HAP-1 (cell line): ENCODE measurements at regions of chr1 and their contacts with region 1.

Region 1: GRCh38 chr1:54996359-54996868 is 2.3 kb upstream of the BSND start:
- DNase-seq: peak; percentile 51 to 91
- H3K4me3 ChIP-seq: no peak overlapping the region
- H3K4me1 ChIP-seq: peaks cover 3% of the 10 kb centered on the region; the same call in 1 of the 2 replicates
- H3K27me3 ChIP-seq: peaks cover 12% of the 10 kb centered on the region

Region 2: GRCh38 chr1:54337928-54338327 is 658.5 kb before region 1 on chr1:
- in situ Hi-C with region 1: no loop called
- DNase-seq: no peak
- H3K4me3 ChIP-seq: no peak overlapping the region
- H3K4me1 ChIP-seq: no peaks in the 10 kb centered on the region
- H3K27me3 ChIP-seq: no peaks in the 10 kb centered on the region

Region 3: DNA sequence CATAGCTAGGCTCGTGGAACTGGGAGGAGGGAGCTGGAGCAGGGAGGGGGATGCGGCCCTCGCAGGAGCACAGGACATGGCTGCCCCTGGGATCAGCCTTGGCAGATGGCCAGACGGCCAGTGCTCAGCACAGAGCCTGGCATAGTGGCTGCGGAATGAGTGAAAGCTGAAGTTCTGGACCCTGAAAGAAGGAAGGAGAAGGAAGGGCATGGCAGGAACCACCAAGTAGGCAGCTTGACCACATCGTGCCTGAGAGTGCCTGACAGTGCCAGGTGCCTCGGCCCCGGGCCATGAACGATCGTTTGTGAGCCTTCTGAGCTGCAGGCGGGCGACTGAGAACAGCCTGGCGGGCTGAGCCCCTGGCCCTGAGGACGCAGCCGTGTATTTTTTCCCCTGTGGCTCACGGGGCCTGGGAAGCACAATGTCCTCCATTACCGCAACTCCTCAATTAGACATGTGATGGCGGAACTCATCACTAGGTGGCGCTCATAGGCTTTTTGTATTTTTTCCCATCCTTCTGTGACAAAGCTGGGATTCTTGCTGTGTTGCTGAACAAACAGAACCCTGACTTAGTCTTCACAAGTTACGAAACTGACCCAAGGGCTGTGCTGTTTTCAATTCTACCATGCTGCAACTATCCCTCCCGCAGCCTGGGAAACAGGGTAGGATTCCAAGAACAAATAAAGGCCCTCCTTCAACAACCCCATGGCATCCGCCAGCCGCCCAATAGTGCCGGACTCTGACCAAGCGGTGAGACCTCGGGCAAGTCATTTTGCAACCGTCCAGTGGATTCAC is 45.8 kb before region 1 on chr1:
- in situ Hi-C with region 1: loop called (anchors 5 kb)
- DNase-seq: peak; percentile 76 to 82
- H3K4me3 ChIP-seq: no peak overlapping the region
- H3K4me1 ChIP-seq: no peaks in the 10 kb centered on the region; the same call in 1 of the 2 replicates
- H3K27me3 ChIP-seq: no peaks in the 10 kb centered on the region

Region 4: GRCh38 chr1:55204997-55205396 is 208.6 kb after region 1 on chr1:
- in situ Hi-C with region 1: no loop called
- DNase-seq: no peak
- H3K4me3 ChIP-seq: no peak overlapping the region
- H3K4me1 ChIP-seq: peaks cover 9% of the 10 kb centered on the region
- H3K27me3 ChIP-seq: no peaks in the 10 kb centered on the region

Region 5: DNA sequence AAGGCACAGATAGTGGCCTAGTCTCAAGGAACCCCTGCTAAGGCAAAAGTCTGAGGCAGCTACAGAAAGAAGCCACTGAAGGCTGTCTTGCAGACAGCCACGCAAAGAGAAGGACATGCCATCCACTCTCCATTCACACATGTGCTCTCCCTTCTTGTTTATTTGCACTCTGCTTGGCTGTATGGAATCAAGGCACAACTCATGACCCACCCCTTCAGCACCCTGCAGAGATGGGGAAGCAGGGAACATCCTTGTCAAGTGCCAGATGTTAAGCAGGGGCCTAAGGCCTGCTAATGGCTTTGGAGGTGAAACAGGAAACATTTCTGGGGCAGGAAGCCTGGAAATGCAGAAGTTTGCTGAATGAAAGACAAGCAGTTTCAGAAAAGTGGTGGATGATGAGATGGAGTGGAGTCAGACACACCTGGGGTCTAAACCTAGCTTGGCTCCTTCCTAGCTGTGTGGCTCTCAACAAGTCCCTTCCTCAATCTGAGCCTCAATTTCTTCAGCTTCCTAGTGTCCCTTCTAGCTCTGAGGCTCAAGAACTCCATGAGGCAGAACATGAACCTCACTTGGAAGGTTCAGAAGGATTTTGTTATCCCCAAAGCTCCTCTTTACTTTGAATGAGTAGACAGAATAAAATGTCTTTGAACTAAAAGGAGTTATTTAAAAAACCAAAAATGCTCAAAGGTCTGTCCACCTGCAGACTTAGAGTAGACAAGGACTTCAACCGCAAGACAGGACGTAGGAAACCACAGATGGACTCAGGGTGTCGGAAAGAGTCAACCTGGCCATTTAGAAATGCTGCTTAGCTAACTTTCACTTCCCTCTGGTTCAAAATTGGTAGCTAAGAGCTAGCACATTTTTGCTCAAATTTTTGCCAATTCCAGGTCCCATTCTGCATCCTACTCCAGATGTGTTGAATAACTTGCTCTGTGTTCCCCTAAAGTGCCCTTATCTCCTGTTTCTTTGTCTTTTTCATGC is 1299.8 kb after region 1 on chr1:
- in situ Hi-C with region 1: no loop called
- DNase-seq: no peak
- H3K4me3 ChIP-seq: no peak overlapping the region
- H3K4me1 ChIP-seq: no peaks in the 10 kb centered on the region
- H3K27me3 ChIP-seq: no peaks in the 10 kb centered on the region